Activated CD4-positive, alpha-beta T cell treated with anti-CD3 and anti-CD28 coated beads for 36 hours (primary cell): ENCODE measurements at regions of chr5 and their contacts with region 1.

Region 1: GRCh38 chr5:2017540-2018389 is 135.0 kb upstream of the IRX4 start:
- DNase-seq: peak; percentile 54
- ATAC-seq: no peak
- H3K4me3 Mint-ChIP-seq: no peak overlapping the region
- H3K27ac Mint-ChIP-seq: no peak overlapping the region
- H3K4me1 Mint-ChIP-seq: no peaks in the 10 kb centered on the region
- H3K27me3 Mint-ChIP-seq: peaks cover 11% of the 10 kb centered on the region

Region 2: GRCh38 chr5:1666812-1667588 is 350.8 kb before region 1 on chr5:
- CTCF ChIA-PET with region 1: no interaction called
- POLR2A ChIA-PET with region 1: no interaction called
- intact Hi-C with region 1: loop called (anchors 1 to 5 kb)
- DNase-seq: peak; percentile 76
- ATAC-seq: peak; percentile 63
- H3K4me3 Mint-ChIP-seq: no peak overlapping the region
- H3K27ac Mint-ChIP-seq: no peak overlapping the region
- H3K4me1 Mint-ChIP-seq: peaks cover 13% of the 10 kb centered on the region
- H3K27me3 Mint-ChIP-seq: peaks cover 63% of the 10 kb centered on the region

Region 3: DNA sequence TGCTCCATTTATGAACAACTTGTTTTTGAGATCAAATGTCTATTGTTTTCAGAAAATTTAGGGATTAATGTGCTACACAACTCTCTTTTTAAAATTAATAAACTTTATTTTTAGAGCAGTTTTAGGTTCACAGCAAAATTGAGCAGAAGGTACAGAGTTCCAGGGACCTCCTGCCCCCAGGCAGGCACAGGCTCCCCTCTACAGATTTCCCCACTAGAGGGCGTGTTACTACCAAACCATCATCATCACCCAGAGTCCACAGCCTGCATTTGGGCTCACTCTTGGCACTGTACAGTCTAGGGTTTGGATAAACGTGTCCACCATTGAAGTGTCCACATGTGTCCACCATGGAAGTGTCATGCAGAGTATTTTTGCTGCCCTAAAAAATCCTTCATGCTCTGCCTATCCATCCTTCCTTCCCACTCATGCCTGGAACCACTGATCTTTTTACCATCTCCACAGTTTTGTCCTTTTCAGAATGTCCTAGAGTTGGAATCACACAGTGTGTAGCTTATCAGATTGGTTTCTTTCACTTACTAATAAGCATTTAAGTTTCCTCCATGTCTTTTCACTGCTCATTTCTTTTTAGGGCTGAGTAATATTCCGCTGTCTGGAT is 279.9 kb before region 1 on chr5:
- CTCF ChIA-PET with region 1: no interaction called
- POLR2A ChIA-PET with region 1: no interaction called
- intact Hi-C with region 1: loop called (anchors 1 to 5 kb)
- DNase-seq: peak; percentile 62
- ATAC-seq: peak; percentile 85
- H3K4me3 Mint-ChIP-seq: no peak overlapping the region
- H3K27ac Mint-ChIP-seq: no peak overlapping the region
- H3K4me1 Mint-ChIP-seq: no peaks in the 10 kb centered on the region
- H3K27me3 Mint-ChIP-seq: peaks cover 24% of the 10 kb centered on the region

Region 4: GRCh38 chr5:1763548-1763911 is 254.2 kb before region 1 on chr5:
- CTCF ChIA-PET with region 1: no interaction called
- POLR2A ChIA-PET with region 1: no interaction called
- intact Hi-C with region 1: loop called (anchors 1 to 5 kb)
- DNase-seq: peak; percentile 62
- ATAC-seq: peak; percentile 58
- H3K4me3 Mint-ChIP-seq: no peak overlapping the region
- H3K27ac Mint-ChIP-seq: no peak overlapping the region
- H3K4me1 Mint-ChIP-seq: no peaks in the 10 kb centered on the region
- H3K27me3 Mint-ChIP-seq: peaks cover 6% of the 10 kb centered on the region